CD4-positive, alpha-beta memory T cell (primary cell): ENCODE measurements at regions of chr7 and their contacts with region 1.

Region 1: DNA sequence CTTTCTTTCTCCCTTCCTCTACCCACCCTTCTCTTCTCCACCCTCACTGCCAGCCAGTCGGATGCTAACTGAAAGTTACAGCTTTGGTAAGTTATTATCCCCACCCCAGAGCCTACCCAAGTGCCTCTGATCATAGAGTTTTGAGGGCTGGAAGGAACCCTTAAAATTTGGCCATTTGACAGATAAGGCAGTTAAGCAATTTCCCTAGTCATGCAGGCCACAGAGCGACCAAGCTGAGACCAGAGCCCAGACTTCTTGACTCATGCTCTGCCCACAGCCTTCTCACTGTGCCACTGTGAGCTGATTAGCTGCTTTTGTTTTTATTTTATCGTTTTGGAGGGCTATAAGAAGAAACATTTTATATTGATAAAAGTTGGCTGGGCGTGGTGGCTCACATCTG is 17.2 kb downstream of the SAP25 start:
- DNase-seq: no peak
- H3K4me3 ChIP-seq: no peak overlapping the region
- H3K4me3 Mint-ChIP-seq: no peak overlapping the region
- H3K27ac ChIP-seq: no peak overlapping the region
- H3K27ac Mint-ChIP-seq: peak overlapping the region in 4 of 7 donors; percentile 12 to 82 (median 62)
- H3K4me1 ChIP-seq: peaks cover 12% of the 10 kb centered on the region
- H3K4me1 Mint-ChIP-seq: peaks cover 8 to 26% (median 13%) of the 10 kb centered on the region in 4 donors
- H3K27me3 ChIP-seq: no peaks in the 10 kb centered on the region
- H3K27me3 Mint-ChIP-seq: no peaks in the 10 kb centered on the region

Region 2: DNA sequence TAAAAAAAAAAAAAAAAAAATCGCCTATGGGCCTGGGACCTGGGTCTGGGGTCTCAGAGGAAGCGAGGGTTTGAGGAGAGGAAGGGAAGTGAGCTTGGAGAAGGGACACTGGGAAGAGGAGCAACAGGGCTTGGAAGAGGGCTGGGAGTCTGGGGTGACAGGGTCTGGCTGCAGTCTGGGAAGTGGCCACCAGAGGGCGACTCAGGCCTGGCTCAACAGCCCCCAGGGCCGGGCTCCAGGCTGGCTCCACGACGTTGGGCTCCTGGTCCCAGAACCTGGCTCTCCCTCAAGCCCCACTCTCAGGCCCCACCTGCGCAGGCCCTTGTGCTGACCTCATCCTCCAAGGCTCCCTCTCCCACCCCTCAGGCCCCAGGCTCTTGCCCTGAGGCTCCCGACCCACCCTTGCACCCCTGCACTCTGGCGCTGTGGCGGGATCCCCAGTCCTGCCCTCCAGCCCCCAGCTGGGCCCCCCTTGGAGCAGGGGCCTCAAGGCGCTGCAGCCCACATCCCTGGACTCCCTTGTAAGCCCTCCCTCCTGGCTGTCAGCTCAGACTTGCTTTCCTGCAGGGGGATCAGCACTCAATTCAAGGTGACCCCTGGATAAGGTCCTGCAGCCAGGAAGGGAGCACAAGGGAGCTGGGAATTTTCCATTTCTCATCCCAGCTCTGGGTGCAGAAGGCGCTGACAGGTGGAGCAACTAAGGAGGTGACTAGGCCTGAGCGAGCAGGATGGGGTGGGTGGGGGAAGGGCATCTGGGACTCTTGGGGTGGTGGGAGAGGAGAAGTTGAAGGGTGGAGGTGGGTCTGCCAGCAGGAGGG is 87.1 kb before region 1 on chr7:
- CTCF ChIA-PET with region 1: interaction called, 70 read pairs
- POLR2A ChIA-PET with region 1: interaction called, 18 read pairs
- intact Hi-C with region 1: loop called (anchors 1 kb)
- DNase-seq: peak; percentile 71 to 78 (median 72)
- H3K4me3 ChIP-seq: no peak overlapping the region
- H3K4me3 Mint-ChIP-seq: no peak overlapping the region
- H3K27ac ChIP-seq: no peak overlapping the region
- H3K27ac Mint-ChIP-seq: peak overlapping the region; percentile 57 to 87 (median 70)
- H3K4me1 ChIP-seq: peaks cover 26% of the 10 kb centered on the region
- H3K4me1 Mint-ChIP-seq: peaks cover 17 to 37% (median 27%) of the 10 kb centered on the region in 4 donors
- H3K27me3 ChIP-seq: no peaks in the 10 kb centered on the region
- H3K27me3 Mint-ChIP-seq: no peaks in the 10 kb centered on the region

Region 3: DNA sequence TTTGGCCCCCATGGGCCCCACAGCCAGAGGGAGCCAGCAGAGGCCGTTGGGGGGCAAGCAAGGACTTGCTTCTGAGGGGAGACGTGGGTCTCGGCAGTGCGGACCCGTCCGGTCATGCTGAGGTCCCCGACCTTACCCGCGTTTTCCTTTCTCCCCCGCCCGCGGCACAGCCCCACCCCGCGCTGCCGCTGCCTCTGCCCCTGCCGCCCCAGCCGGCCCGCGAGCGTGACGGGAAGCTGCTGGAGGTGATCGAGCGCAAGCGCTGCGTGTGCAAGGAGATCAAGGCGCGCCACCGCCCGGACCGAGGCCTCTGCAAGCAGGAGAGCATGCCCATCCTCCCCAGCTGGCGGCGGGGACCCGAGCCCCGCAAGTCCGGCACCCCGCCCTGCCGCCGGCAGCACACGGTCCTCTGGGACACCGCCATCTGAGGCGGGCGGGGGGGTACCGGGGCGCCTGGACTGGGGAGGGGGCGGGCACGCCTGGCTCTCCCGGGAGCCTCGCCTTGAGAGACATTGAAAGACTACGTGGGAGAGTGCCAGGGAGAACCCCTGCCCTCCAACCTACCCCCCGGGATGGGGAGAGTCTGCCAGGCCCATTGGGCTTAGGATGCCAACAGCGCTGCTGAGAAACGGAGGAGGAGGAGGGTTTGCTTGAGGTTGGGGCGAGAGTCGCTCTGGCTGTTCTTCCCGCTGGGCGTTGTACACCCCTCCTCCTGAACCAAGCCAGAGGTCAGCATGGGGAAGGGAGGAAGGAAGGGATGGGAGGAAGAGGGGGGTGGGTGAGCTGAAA is 62.9 kb before region 1 on chr7:
- CTCF ChIA-PET with region 1: interaction called, 25 read pairs
- POLR2A ChIA-PET with region 1: interaction called, 11 read pairs
- intact Hi-C with region 1: loop called (anchors 2 kb)
- DNase-seq: peak; percentile 48 to 60 (median 54)
- H3K4me3 ChIP-seq: no peak overlapping the region
- H3K4me3 Mint-ChIP-seq: peak overlapping the region; percentile 71 to 84 (median 75)
- H3K27ac ChIP-seq: no peak overlapping the region
- H3K27ac Mint-ChIP-seq: peak overlapping the region in 3 of 7 donors; percentile 32 to 86 (median 84)
- H3K4me1 ChIP-seq: peaks cover 10% of the 10 kb centered on the region
- H3K4me1 Mint-ChIP-seq: peaks cover 3 to 29% (median 15%) of the 10 kb centered on the region in 4 donors
- H3K27me3 ChIP-seq: no peaks in the 10 kb centered on the region
- H3K27me3 Mint-ChIP-seq: peaks cover 0 to 2% of the 10 kb centered on the region in 2 donors

Region 4: DNA sequence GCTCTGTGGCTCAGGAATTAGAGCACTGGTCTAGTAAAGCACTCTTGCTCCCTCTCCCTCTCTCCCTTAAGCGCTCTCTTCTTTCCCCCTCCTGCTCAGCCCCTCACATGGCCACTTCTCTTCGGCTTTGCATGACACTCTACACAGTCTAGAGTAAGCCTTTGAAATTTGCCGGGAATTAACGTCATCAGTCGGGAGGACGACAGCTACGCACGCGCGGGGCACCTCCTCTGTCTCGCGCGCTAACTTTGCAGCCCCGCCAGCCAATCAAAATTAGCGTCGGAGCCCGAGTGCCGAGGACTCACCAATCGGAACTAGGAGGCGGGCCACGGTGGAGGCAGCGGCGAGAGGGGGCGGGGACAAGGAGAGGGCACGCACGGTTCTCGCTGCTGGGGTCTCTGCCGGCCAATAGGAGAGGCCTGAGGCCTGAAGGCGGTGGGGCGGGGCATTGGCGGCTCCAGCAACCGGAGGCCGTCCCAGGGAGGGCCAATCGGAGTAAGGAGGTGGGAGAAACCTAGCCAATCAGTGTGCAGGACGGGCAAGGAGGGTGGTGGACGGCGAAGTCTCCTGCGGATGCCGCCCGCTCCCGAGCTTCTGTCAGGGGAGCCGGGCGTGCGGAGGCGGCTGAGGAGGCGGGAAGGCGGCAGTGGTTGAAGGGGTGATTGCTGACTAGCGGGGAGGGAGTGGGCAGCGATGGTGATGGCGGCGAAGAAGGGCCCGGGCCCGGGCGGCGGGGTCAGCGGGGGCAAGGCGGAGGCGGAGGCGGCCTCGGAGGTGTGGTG is 17.7 kb before region 1 on chr7 and contains the start of gene AGFG2:
- CTCF ChIA-PET with region 1: interaction called, 254 read pairs
- POLR2A ChIA-PET with region 1: interaction called, 51 read pairs
- intact Hi-C with region 1: loop called (anchors 1 kb)
- DNase-seq: peak; percentile 100
- H3K4me3 ChIP-seq: peak within 1 kb of the TSS; percentile 33 to 79
- H3K4me3 Mint-ChIP-seq: peak within 1 kb of the TSS; percentile 88 to 99 (median 97)
- H3K27ac ChIP-seq: peak within 1 kb of the TSS; percentile 49
- H3K27ac Mint-ChIP-seq: peak within 1 kb of the TSS; percentile 84 to 95 (median 91)
- H3K4me1 ChIP-seq: peaks cover 42% of the 10 kb centered on the region
- H3K4me1 Mint-ChIP-seq: peaks cover 33 to 49% (median 41%) of the 10 kb centered on the region in 4 donors
- H3K27me3 ChIP-seq: no peaks in the 10 kb centered on the region
- H3K27me3 Mint-ChIP-seq: no peaks in the 10 kb centered on the region
- total RNA-seq, gene AGFG2: 56.6 to 58.3 TPM

Region 5: DNA sequence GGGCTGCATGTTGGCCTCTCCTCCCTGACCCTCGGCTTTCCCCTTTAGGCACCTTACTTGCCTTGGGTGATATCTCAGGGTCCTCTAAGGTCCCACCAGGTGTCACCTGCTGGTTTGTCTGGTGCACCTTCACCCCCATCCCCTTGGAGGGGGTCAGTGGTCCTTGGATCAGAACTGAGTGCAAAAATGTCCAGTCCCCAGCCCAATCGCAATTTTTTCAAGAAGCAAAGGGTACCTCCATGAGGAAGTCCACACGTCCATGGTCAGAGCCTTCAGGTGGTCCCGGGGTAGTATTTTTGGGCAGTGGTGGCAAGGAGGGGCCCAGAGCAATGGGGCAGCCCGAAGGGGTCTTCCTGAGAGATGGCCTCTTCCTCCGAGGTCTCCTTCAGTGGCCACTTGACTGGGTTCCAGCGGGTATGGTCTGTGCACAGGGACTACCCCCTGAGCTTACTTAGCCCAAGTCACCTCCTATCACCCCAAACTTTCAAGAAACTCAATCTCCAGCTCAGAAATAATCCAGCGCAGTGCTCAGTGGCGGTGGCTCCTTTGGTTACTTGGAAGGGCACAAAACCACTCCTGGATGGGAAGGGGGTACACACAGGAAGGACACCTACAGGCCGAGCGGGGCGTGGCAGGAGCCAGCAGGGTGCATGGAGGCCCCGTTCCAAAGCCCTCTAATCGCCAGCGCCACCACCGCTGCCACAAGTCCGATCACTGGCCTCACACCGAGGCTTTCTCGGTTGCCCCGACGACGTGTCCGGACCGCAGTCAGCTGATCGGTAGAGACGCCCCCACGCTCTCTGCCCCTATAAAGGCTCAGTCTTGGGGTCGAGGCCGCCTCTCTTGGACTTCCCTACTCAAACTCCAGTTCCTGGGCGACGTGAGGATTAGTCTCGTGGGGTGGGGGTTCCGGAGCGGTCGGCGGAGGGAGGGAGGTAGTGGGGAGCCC is 12.6 kb after region 1 on chr7:
- CTCF ChIA-PET with region 1: interaction called, 17 read pairs
- POLR2A ChIA-PET with region 1: interaction called, 10 read pairs
- intact Hi-C with region 1: no loop called
- DNase-seq: peak; percentile 43 to 70 (median 46)
- H3K4me3 ChIP-seq: peak overlapping the region in 1 of 2 donors; percentile 47
- H3K4me3 Mint-ChIP-seq: peak overlapping the region; percentile 31 to 77 (median 68)
- H3K27ac ChIP-seq: peak overlapping the region; percentile 48
- H3K27ac Mint-ChIP-seq: peak overlapping the region; percentile 32 to 93 (median 83)
- H3K4me1 ChIP-seq: peaks cover 40% of the 10 kb centered on the region
- H3K4me1 Mint-ChIP-seq: peaks cover 14 to 52% (median 27%) of the 10 kb centered on the region in 4 donors
- H3K27me3 ChIP-seq: no peaks in the 10 kb centered on the region
- H3K27me3 Mint-ChIP-seq: no peaks in the 10 kb centered on the region